Uterus (tissue), 4 donors: ENCODE measurements at regions of chr9 and their contacts with region 1.

Region 1: DNA sequence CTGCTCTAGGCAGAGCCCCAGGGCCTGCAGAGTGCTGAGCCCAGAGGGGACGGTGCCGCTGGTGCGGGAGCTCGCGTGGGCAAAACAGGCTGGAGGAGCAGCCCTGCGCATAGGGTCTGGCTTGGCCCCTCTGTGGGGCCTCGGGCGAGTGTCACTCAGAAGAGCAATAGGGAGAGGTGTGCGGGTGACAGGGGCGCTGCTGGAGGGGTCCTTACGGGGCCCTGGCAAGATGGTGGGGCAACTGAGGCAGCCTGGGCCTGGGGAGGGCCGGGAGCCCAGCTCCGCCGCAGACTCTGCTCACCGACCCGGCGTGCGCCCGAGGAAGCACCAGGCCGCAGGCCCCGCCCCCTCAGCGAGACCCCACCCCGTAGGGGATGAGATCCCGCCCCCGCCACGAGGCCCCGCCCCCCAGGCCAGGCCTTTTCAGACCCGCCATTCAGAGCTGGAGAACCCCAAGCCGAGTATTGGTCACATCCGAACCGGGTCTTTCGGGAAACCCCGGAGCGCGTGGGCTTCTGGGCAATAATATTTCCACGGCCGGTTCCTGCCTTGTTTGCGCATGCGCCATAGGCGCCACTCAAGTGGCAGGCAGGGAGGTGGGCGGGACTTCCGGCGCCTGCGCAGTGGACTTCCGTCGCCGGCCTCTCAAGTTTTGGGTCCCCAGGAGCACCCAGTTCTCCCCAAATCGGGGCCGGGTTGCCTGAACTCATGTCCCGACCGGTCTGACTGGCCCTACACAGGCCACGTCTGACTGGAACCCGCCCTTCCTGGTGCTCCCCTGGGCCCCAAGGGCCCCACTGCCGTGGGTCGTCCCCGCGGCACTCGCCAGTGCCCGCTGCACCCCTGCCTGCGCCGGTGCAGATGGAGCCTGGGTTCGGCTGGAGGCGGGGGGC is 1.3 kb upstream of the RNF208 start:
- DNase-seq: peak; percentile 98 to 99
- H3K4me3 ChIP-seq: peak overlapping the region; percentile 58 to 63
- H3K27ac ChIP-seq: peak overlapping the region; percentile 76 to 90
- H3K4me1 ChIP-seq: peaks cover 0 to 13% of the 10 kb centered on the region in 2 donors
- H3K27me3 ChIP-seq: peaks cover 3 to 4% of the 10 kb centered on the region in 2 donors
- CTCF ChIP-seq: peak in 1 of 4 experiments; percentile 38
- POLR2A ChIP-seq: peak; percentile 13 to 67

Region 2: DNA sequence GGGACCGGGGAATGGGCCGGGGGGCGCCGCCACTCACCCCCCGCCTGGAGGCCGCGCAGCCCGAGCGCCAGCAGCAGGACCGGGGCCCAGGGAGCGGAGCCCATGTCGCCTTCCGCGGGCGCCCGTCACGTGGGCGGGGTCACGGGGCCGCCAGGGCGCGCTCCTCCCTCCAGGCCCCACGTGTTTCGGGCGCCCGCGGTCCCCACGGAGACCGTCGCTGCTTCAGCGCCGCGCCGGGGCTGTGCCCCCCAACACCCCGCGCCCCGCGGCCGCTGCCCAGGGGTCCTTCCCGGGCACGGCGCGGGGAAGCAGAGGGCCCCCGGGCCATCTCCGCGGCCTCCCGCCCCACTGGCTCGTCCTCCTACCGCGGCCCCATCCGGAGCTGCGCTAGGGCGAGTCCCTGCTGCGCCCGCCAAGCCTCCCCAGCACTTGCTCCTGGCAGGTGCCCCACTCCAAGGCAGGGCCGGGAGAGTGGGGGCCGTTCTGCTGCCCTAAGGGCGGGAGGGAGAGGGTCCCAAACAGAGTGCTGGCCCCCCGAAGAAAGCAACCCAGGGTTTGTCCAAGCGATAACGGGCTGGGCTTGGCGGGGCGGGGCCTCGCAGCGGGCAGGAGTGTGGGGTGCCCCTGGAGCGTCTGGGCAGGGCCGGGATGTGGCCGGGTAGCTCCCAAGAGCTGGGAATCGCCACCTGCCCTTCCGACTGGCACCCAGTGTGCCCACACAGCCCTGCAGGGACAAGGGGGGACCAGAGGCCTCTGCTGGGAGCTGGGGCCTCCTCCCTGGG is 108.5 kb before region 1 on chr9 and contains the start of gene DPP7:
- intact Hi-C with region 1: loop called (anchors 10 kb)
- DNase-seq: peak in 1 of 2 donors; percentile 55
- H3K4me3 ChIP-seq: peak within 1 kb of the TSS; percentile 21 to 59
- H3K27ac ChIP-seq: peak within 1 kb of the TSS in 1 of 2 donors; percentile 1
- H3K4me1 ChIP-seq: peaks cover 0 to 6% of the 10 kb centered on the region in 2 donors
- H3K27me3 ChIP-seq: no peaks in the 10 kb centered on the region
- CTCF ChIP-seq: peak in 1 of 4 experiments; percentile 4
- POLR2A ChIP-seq: peak; percentile 10 to 25
- total RNA-seq, gene DPP7: 23.2 to 100 (median 76.8) TPM